Tibial artery (tissue), 4 donors: ENCODE measurements at regions of chr18 and their contacts with region 1.

Region 1: DNA sequence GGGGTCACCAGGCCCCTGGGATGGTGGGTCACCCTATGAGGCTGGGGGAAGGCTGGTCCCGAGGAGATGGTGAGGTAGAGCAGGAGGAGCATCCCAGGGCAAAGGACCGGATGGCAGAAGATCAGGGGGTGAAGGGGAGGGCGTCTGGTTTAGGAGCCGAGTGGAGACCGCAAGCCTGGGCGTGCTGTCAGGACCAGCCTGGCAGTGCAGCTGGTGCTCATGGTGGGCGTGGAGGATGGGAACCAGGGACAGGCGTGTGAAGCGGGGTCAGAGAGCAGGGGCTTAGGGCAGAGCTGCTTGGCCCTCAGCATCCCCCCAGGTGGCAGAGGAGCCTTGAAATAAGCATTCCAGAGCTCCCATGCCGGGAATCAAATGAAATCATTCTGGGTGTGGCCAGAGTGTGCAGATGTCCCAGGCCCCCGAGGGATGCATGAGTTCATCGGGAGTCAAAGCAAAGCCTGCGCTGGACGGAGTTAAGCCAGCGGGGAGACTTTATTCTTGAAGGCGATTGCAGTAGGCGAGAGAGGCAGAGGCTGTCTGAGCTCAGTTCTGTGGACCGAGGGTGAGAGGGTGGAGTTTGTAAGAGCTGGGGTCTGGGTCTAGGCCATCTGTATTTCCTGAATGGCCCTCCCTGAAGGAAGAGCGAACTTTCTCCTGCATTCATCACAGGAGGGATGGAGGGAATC is 33.1 kb upstream of the MBP start:
- DNase-seq: peak in 1 of 2 donors; percentile 43
- H3K4me3 ChIP-seq: no peak overlapping the region
- H3K27ac ChIP-seq: no peak overlapping the region
- H3K4me1 ChIP-seq: peaks cover 0 to 4% (median 0%) of the 10 kb centered on the region in 4 donors
- H3K27me3 ChIP-seq: peaks cover 0 to 28% of the 10 kb centered on the region in 2 donors
- CTCF ChIP-seq: no peak

Region 2: GRCh38 chr18:77223653-77224052 is 58.0 kb after region 1 on chr18:
- intact Hi-C with region 1: loop called (anchors 5 kb)
- DNase-seq: no peak
- H3K4me3 ChIP-seq: no peak overlapping the region
- H3K27ac ChIP-seq: no peak overlapping the region
- H3K4me1 ChIP-seq: no peaks in the 10 kb centered on the region
- H3K27me3 ChIP-seq: no peaks in the 10 kb centered on the region
- CTCF ChIP-seq: no peak

Region 3: DNA sequence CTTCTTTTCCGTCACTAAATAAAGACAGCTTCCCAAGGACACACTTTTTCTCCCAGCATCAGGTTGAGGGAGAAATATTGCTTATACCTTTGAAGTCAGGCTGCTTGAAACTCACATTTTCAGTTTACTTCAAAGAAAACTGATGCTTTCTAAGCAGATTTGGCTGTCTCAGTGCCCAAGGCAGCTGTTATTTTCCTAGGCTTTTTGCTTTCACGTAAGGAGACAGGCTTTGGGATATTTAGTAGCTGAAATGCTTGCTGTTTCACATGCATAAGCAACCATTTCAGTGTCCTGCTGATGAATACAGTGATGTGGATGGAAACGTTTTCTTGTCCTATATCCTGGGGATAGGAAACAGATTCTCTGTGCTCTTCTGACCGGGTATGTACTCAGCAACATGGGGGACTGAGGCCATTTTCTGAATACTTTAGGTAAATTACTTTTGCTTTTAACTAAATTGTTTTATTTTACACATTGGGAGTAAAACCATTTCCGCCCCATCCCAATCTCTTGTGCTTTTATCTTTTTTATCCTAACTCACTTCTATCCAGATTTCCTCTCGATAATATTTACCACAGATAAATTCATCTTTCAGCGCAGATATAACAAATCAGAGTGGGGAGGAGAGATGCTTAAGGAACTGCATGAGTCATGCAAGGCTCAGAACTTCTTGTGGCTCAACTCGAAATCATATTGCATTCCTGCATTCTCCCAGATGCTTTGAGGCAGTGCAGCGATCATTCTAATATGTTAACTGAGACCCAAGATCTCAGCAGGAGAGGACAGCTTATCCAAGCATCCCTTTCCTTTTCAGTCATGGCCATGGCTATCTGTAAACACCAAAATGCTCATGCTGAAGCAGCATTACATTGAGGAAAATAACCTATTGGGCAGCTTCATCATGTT is 106.2 kb after region 1 on chr18:
- intact Hi-C with region 1: no loop called
- DNase-seq: no peak
- H3K4me3 ChIP-seq: no peak overlapping the region
- H3K27ac ChIP-seq: no peak overlapping the region
- H3K4me1 ChIP-seq: no peaks in the 10 kb centered on the region
- H3K27me3 ChIP-seq: no peaks in the 10 kb centered on the region
- CTCF ChIP-seq: no peak